Panc1 (cell line): ENCODE measurements at regions of chr2 and their contacts with region 1.

Region 1: GRCh38 chr2:224545884-224546644 is 39.1 kb downstream of the CUL3 start:
- DNase-seq: no peak
- ATAC-seq: no peak
- H3K4me3 ChIP-seq: no peak overlapping the region
- H3K27ac ChIP-seq: no peak overlapping the region
- H3K4me1 ChIP-seq: no peaks in the 10 kb centered on the region
- H3K27me3 ChIP-seq: no peaks in the 10 kb centered on the region
- CTCF ChIP-seq: no peak

Region 2: GRCh38 chr2:224389317-224389716 is 156.7 kb before region 1 on chr2:
- CTCF ChIA-PET with region 1: no interaction called
- POLR2A ChIA-PET with region 1: no interaction called
- in situ Hi-C with region 1: no loop called
- intact Hi-C with region 1: no loop called
- DNase-seq: no peak
- ATAC-seq: no peak
- H3K4me3 ChIP-seq: no peak overlapping the region
- H3K27ac ChIP-seq: no peak overlapping the region
- H3K4me1 ChIP-seq: no peaks in the 10 kb centered on the region
- H3K27me3 ChIP-seq: no peaks in the 10 kb centered on the region
- CTCF ChIP-seq: no peak

Region 3: DNA sequence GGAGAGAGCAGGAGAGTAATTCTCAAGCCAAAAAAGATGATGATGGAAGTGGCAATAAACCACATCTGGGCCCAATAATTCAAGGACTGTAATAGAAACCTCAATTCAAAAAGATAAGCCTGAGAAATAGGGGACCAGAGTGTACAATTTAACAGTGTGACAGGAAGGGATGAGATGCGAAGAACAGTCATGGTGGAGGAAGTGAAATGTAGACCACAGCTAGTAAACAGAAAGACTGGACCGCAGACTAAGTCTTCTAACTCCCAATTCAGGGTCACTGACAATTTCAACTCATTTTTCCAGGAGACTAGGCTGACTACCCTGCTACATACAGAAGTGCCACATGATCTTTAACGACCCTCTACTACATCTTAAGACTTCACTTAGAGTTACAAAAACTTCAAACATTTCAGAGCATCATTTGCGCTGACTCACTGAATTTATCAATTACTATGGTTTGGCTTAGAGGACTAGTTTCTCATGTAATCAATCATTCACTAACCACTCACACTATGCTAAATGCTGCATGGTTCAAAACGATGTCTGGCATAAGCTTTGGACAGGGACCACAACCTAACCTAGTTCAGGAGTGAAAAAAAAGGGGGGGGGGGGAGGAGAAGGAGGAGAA is 30.1 kb after region 1 on chr2:
- CTCF ChIA-PET with region 1: interaction called, 4 read pairs
- POLR2A ChIA-PET with region 1: interaction called, 11 read pairs
- in situ Hi-C with region 1: no loop called
- intact Hi-C with region 1: no loop called
- DNase-seq: no peak
- ATAC-seq: no peak
- H3K4me3 ChIP-seq: no peak overlapping the region
- H3K27ac ChIP-seq: no peak overlapping the region
- H3K4me1 ChIP-seq: peaks cover 38% of the 10 kb centered on the region
- H3K27me3 ChIP-seq: no peaks in the 10 kb centered on the region
- CTCF ChIP-seq: no peak